Heart left ventricle (tissue), 16 donors: ENCODE measurements at regions of chr1 and their contacts with region 1.

Region 1: GRCh38 chr1:169794530-169795416 is at the start of gene METTL18:
- DNase-seq: peak; percentile 91 to 94 (median 91)
- ATAC-seq: peak; percentile 99 to 100 (median 100)
- H3K4me3 ChIP-seq: peak within 1 kb of the TSS; percentile 63 to 84 (median 71)
- H3K27ac ChIP-seq: peak within 1 kb of the TSS; percentile 76 to 97 (median 90)
- H3K4me1 ChIP-seq: peaks cover 0 to 27% (median 11%) of the 10 kb centered on the region in 12 donors
- H3K27me3 ChIP-seq: no peaks in the 10 kb centered on the region
- CTCF ChIP-seq: peak in 1 of 12 donors; percentile 10
- POLR2A ChIP-seq: peak in 1 of 2 donors; percentile 34
- total RNA-seq, gene METTL18: 2.0 to 8.2 (median 6.0) TPM

Region 2: DNA sequence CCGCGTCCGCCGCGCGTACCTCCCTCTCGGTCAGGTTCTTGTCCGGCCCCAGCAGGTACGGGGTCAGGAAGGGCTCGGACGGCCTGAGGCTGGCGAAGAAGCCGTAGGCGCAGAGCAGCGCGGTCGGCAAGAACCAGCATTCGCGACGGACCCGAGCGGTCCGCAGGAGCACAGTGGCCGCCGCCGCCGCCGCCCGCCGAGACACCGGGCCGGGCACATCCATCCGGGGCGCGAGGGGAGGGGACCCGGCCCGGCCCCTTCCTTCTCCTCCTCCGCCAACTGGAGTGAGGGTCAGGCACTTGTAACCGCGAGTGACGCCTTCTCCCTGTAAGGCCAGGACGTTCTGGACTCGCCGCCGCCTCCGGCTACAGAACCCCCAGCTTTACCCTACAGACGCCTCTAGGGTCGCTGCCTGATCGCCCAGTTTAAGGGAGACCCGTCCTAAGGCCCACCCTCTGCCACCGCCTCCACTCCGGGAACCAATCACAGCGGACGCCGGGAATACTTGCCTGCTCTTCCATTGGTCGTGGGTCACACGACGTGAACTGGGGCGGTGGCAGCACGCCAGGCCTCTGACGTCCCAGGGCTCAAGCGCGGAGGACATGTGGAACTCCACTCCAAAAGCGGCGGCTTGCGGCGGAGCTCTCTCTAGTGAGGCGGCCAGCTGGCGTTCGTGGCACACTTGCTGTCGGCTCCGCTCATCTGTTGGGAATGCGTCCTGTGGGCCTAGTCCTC is 309.1 kb before region 1 on chr1 and contains the start of gene SLC19A2:
- intact Hi-C with region 1: loop called in 2 of 10 experiments (anchors 10 kb)
- DNase-seq: peak; percentile 99 to 100 (median 100)
- ATAC-seq: peak; percentile 94 to 99 (median 97)
- H3K4me3 ChIP-seq: peak within 1 kb of the TSS; percentile 50 to 95 (median 84)
- H3K27ac ChIP-seq: peak within 1 kb of the TSS; percentile 94 to 99 (median 98)
- H3K4me1 ChIP-seq: peaks cover 0 to 40% (median 19%) of the 10 kb centered on the region in 12 donors
- H3K27me3 ChIP-seq: no peaks in the 10 kb centered on the region
- CTCF ChIP-seq: peak in 9 of 12 donors; percentile 15 to 61 (median 40)
- POLR2A ChIP-seq: peak; percentile 75 to 98
- total RNA-seq, gene SLC19A2: 8.2 to 27.3 (median 13.8) TPM

Region 3: GRCh38 chr1:169741666-169742394 is 52.9 kb before region 1 on chr1:
- intact Hi-C with region 1: loop called in 2 of 10 experiments (anchors 5 kb)
- DNase-seq: no peak
- ATAC-seq: no peak
- H3K4me3 ChIP-seq: no peak overlapping the region
- H3K27ac ChIP-seq: no peak overlapping the region
- H3K4me1 ChIP-seq: peaks cover 0 to 41% (median 14%) of the 10 kb centered on the region in 12 donors
- H3K27me3 ChIP-seq: no peaks in the 10 kb centered on the region
- CTCF ChIP-seq: no peak
- POLR2A ChIP-seq: no peak

Region 4: DNA sequence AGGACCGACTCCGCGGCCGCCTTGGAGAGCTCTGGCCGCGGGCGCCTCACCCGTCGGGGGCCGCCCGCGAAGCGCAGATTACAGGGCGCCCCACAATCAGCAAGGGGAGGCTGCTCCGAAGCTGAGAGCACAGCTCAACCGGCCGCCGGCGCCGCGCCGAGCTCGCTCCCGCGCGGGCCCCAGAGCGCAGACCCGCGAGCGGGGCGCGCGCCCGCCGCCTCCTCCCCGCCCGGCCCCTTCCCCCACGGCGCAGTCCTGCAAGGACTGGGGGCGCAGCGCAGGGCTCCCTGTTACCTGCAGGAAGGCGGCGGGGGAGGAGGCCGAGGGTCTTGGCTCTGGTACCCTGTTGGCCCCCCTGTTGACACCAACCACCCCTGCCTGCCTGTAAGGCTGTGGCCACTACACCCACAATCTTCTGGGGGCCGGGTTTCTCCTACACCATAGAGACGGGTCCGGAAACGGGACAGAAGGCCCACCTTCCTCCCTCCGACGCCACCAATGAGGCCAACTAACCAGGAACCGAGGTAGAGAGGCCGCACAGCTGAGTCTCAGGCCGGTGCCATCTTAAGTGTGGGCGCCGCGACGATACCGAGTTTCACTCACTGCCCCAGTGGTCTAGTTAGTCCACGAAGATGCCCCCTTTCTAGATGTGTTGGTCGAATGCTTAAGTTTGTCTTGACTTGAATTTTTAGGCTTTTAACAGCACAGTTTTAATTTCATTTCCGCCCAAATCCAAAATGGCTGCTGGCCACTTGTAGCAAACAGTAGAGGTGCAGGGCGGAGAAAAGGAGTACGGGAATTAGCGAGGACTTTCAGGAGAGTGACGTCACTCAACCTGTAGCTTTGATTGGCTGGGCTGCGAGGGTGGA is 99.0 kb after region 1 on chr1 and contains the start of gene SCYL3:
- intact Hi-C with region 1: loop called in 1 of 10 experiments (anchors 5 kb)
- DNase-seq: peak; percentile 94 to 97 (median 96)
- ATAC-seq: peak; percentile 98 to 99 (median 99)
- H3K4me3 ChIP-seq: peak within 1 kb of the TSS; percentile 78 to 99 (median 94)
- H3K27ac ChIP-seq: peak within 1 kb of the TSS; percentile 94 to 100 (median 97)
- H3K4me1 ChIP-seq: peaks cover 0 to 38% (median 18%) of the 10 kb centered on the region in 12 donors
- H3K27me3 ChIP-seq: peaks cover 0 to 6% (median 0%) of the 10 kb centered on the region in 9 donors
- CTCF ChIP-seq: peak in 1 of 12 donors; percentile 19
- POLR2A ChIP-seq: peak in 1 of 2 donors; percentile 33
- total RNA-seq, gene SCYL3: 4.9 to 8.6 (median 6.4) TPM

Region 5: DNA sequence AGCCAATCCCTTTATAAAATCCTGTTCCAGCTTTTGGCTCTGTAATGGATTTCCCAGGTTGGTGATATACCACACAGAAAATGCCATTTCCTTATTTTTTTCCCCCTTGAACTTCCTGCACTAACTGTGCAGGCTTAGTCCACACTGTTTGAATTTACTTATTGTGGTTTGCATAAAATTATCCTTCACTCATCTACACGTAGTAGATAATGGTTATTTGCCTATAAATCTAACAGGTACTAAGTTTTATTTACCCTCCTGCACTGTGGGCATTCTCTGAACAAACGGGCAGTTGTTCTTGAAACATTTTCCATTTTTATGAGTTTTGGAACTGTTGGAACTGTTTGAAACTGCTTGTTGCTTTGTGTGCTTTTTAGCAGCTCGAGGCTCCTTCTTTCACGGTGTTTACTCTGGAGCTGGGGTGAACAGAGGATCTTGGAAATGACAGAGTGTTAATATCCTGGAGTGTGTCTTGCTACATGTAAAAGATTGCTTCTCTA is 302.7 kb after region 1 on chr1:
- intact Hi-C with region 1: no loop called
- DNase-seq: no peak
- ATAC-seq: no peak
- H3K4me3 ChIP-seq: no peak overlapping the region
- H3K27ac ChIP-seq: no peak overlapping the region
- H3K4me1 ChIP-seq: no peaks in the 10 kb centered on the region
- H3K27me3 ChIP-seq: no peaks in the 10 kb centered on the region
- CTCF ChIP-seq: no peak
- POLR2A ChIP-seq: no peak